ENCODE measurements at regions of chr11 and their contacts with region 1.

Region 1: DNA sequence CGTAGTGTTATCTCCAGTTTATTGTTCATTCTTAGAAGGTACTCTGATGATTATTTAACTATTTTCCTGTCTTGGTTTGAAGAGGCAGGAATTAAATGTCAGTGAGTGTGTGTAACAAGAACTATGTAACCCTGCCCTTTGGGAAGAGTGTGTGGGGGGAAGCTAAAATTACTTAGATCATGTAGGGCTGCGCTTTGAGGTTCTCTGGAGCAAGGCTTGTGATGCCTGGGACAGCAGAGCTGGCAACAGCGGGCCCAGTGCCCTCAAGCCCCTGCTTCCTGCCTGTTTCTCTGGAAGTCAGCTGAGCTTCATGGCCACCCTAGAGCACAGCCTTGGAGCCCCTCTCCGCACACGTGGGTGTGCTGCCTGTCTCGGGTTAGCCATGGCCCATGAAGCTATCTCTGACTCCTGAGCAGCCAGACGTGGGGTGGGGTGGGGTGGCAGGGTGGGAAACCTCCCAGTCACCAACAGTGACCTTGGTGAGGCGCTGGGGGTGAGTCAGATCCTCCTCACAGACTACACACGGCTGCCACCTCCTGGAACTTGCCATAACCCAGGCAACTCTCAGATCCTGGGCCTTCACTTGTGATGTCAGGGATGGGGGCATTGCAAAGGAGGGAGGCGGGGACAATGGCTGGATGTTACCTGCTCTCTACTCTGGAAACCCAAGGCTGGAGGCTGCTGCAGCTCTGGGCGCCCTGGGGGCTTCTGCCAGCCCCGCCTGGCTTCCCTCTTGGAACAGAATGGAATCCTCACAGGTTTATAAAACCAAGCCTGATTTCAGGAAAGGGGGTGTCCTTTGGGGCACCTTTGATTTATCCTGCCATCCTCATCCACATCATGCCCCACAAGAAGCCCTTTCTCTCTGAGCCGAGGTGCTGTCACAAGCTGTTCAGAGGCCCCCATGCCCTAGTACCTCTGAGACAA is 88.6 kb downstream of the SNX19 start:
- DNase-seq: peak; percentile 43
- H3K4me3 ChIP-seq: no peak overlapping the region
- H3K27ac ChIP-seq: peak overlapping the region; percentile 34
- H3K27me3 ChIP-seq: peaks cover 5% of the 10 kb centered on the region
- CTCF ChIP-seq: peak; percentile 70

Region 2: GRCh38 chr11:129790106-129790505 is 1037.6 kb before region 1 on chr11:
- CTCF ChIA-PET with region 1: no interaction called
- POLR2A ChIA-PET with region 1: no interaction called
- DNase-seq: no peak
- H3K4me3 ChIP-seq: no peak overlapping the region
- H3K27ac ChIP-seq: no peak overlapping the region
- H3K27me3 ChIP-seq: peaks cover 6% of the 10 kb centered on the region
- CTCF ChIP-seq: no peak

Region 3: GRCh38 chr11:130442737-130443136 is 385.0 kb before region 1 on chr11:
- CTCF ChIA-PET with region 1: interaction called, 20 read pairs
- POLR2A ChIA-PET with region 1: interaction called, 3 read pairs
- DNase-seq: no peak
- H3K4me3 ChIP-seq: no peak overlapping the region
- H3K27ac ChIP-seq: no peak overlapping the region
- H3K27me3 ChIP-seq: no peaks in the 10 kb centered on the region
- CTCF ChIP-seq: no peak

Region 4: DNA sequence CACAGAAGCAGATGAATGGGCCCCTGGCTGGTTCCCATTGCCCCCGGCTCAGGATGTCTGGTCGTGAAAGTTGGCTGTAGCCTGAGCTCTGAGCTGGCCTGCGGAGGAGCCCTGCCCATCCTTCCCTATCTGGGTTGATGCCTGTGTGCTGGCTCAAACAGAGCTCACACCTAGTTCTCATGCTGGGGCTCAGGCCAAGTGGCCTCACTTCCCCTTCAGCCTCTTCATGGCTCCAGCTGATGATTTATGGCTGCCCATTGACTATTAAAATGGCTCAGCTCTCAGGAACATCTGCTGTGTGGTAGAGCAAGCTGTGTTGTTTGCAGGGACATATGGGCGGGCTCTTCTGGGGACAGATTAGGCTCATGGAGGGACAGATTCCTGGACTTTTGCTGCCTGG is 314.6 kb before region 1 on chr11:
- CTCF ChIA-PET with region 1: no interaction called
- POLR2A ChIA-PET with region 1: no interaction called
- DNase-seq: no peak
- H3K4me3 ChIP-seq: no peak overlapping the region
- H3K27ac ChIP-seq: no peak overlapping the region
- H3K27me3 ChIP-seq: no peaks in the 10 kb centered on the region
- CTCF ChIP-seq: no peak

Region 5: DNA sequence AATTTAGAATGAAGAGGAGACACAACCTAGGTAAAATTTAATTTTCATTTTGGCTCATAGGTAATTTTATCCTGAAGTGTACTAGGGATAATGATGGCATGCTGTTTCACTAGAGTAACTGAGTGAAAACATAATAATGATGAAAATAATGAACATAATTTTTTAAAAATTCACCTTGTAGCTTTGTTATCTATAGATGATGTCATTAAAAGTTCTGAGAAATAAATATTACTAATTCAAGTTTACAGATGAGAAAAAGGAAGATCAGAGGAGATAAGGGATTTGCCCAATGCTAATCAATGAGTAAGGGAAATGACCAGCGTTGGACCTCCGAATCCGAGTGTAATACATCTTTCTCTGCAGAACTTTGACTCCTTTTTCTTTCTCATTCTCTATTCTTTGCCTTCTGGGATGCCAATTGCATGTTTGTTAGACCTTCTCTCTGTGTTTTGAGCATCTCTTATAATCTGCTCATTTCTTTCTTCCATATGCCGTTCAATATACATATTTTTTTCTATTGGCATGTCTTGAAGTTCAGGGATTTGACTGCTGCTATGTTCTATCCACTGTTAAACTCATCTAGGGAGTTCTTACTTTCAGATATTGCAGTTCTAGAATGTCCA is 97.9 kb before region 1 on chr11:
- CTCF ChIA-PET with region 1: interaction called, 10 read pairs
- POLR2A ChIA-PET with region 1: no interaction called
- DNase-seq: no peak
- H3K4me3 ChIP-seq: no peak overlapping the region
- H3K27ac ChIP-seq: no peak overlapping the region
- H3K27me3 ChIP-seq: no peaks in the 10 kb centered on the region
- CTCF ChIP-seq: no peak

Region 6: GRCh38 chr11:130792772-130793171 is 34.9 kb before region 1 on chr11:
- CTCF ChIA-PET with region 1: no interaction called
- POLR2A ChIA-PET with region 1: no interaction called
- DNase-seq: no peak
- H3K4me3 ChIP-seq: no peak overlapping the region
- H3K27ac ChIP-seq: no peak overlapping the region
- H3K27me3 ChIP-seq: peaks cover 5% of the 10 kb centered on the region
- CTCF ChIP-seq: no peak

Region 7: GRCh38 chr11:130839981-130840666 is 12.4 kb after region 1 on chr11:
- CTCF ChIA-PET with region 1: interaction called, 40 read pairs
- POLR2A ChIA-PET with region 1: no interaction called
- DNase-seq: peak; percentile 24
- H3K4me3 ChIP-seq: no peak overlapping the region
- H3K27ac ChIP-seq: no peak overlapping the region
- H3K27me3 ChIP-seq: no peaks in the 10 kb centered on the region
- CTCF ChIP-seq: no peak